ENCODE measurements at regions of chr11 and their contacts with region 1.

Region 1: DNA sequence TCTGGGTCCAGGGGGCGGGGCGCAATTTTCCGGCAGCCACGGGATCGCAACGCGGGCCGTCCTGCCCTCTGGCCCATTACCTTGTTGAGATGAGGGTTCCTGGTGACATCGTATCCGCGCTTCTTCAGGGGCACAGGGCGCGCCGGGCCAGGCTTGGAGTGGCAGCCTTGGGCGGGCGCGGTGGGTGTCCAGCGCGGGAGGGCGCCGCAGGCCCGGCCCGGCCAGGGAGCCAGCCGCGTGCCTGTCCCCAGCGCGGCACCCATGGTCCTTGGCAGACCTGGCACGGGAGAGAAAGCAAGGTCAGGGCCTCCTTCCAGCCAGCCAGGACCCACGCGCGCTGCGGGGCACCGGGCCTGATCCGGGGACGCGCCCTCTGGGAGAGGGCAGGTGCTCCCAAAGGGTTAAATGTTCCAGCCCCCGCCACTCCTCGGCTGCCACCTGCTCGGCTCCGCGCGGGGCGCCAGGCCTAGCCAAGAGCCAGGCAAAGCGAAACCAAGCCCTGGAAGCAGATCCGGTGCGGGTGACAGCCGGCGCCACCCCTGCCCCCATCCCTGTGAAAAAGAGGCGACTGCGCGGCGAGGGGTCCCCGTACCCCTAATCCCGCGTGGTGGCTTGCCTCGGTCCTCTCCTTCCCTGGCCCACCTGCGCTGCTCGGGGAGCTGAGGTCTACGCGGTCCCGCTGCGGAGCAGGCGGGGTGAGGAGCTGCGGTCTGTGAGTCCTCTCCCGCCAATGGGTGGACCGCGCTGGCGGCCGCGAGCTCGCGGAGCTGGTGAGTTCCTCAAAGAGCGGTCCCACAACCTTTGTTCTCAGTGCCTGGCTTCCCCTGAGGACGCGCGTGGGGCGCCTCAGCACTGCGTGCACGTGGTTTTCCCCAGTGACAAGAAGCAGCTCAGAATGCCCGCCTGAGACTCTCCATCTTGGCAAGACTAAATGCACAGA is at the start of gene ME3:
- DNase-seq: peak; percentile 87 to 90
- H3K4me3 ChIP-seq: peak within 1 kb of the TSS; percentile 95
- H3K4me3 Mint-ChIP-seq: peak within 1 kb of the TSS; percentile 84
- H3K27ac Mint-ChIP-seq: peak within 1 kb of the TSS; percentile 87
- H3K4me1 ChIP-seq: peaks cover 50% of the 10 kb centered on the region
- H3K4me1 Mint-ChIP-seq: peaks cover 76% of the 10 kb centered on the region
- H3K27me3 ChIP-seq: no peaks in the 10 kb centered on the region
- H3K27me3 Mint-ChIP-seq: no peaks in the 10 kb centered on the region
- CTCF ChIP-seq: peak; percentile 8 to 31
- total RNA-seq, gene ME3: 32.8 and 36.9 TPM in 2 replicates

Region 2: GRCh38 chr11:86302100-86302793 is 369.7 kb before region 1 on chr11 and contains the start of gene HIKESHI:
- CTCF ChIA-PET with region 1: no interaction called
- POLR2A ChIA-PET with region 1: no interaction called
- intact Hi-C with region 1: no loop called
- DNase-seq: peak; percentile 98 to 99
- H3K4me3 ChIP-seq: peak within 1 kb of the TSS; percentile 58
- H3K4me3 Mint-ChIP-seq: peak within 1 kb of the TSS; percentile 98
- H3K27ac Mint-ChIP-seq: peak within 1 kb of the TSS; percentile 99
- H3K4me1 ChIP-seq: 0 out of 2 replicates have a peak, but pooled peaks cover 10% of the 10 kb centered on the region
- H3K4me1 Mint-ChIP-seq: peaks cover 8% of the 10 kb centered on the region
- H3K27me3 ChIP-seq: no peaks in the 10 kb centered on the region
- H3K27me3 Mint-ChIP-seq: no peaks in the 10 kb centered on the region
- CTCF ChIP-seq: no peak
- total RNA-seq, gene HIKESHI: 81.3 and 82.0 TPM in 2 replicates

Region 3: DNA sequence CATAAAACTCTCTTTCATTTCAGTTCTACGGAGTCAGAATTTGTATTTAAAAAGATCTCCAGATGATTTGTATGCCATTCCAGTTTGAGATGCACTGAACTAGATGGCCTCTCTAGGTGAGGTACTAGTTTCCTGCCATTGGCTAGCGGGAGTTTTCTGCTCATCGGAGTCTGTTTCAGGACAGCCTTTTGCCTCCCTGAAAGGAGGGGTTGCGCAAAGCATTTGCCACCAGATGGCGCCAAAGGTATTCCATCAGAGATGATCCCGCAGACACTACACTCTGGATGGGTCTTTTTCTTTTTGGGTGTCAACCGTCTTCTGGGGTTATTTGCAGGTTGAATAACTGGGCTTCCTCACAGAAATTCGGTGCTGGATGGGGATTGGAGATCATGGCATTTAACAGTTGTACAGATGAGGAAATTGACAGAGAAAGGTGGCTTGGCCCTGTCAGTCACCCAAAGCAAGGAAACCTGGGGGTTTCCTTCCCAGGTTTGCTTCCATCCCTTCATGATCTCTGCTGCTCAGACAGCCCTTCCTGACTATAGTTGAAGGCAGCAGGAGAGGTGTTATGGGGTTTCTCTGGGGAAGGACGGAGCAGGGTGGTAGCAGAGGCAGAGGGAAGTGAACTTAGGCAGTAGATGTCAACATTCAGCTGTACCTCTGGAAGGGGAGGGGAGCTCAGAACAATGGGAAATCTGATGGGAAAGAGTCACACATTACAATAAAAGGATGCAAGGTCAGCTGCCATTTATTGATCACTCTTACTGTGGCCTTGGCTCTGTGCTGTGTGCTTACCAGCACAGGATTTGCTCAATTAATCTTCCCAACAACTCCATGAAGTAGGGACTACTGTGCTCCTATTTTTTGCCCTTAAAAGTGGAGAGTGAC is 215.7 kb before region 1 on chr11:
- CTCF ChIA-PET with region 1: no interaction called
- POLR2A ChIA-PET with region 1: no interaction called
- intact Hi-C with region 1: loop called (anchors 2 kb)
- DNase-seq: peak; percentile 91 to 93
- H3K4me3 ChIP-seq: no peak overlapping the region
- H3K4me3 Mint-ChIP-seq: no peak overlapping the region
- H3K27ac Mint-ChIP-seq: peak overlapping the region; percentile 65
- H3K4me1 ChIP-seq: peaks cover 29% of the 10 kb centered on the region
- H3K4me1 Mint-ChIP-seq: peaks cover 41% of the 10 kb centered on the region
- H3K27me3 ChIP-seq: no peaks in the 10 kb centered on the region
- H3K27me3 Mint-ChIP-seq: no peaks in the 10 kb centered on the region
- CTCF ChIP-seq: peak; percentile 98

Region 4: DNA sequence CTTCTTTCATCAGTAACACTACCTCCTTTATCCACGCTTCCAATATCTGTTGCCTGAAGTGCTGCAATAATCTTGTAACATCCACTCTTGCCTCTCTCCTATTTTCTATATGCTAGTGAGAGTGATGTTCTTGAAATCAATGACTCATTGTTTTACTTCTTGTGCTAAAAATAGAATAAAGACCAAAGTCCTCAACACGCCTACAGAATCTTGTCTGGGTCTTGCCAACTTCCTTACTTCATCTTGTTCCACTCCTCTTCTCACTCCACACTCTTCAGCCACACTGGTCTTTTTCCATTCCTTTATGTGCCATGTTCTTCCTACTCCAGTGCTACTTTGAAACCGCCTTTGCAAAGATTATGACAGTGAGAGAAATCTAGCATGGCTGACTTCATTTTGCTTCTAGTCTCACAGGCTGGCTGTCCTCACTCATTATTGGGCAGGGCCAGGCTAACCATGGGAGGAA is 160.8 kb before region 1 on chr11:
- CTCF ChIA-PET with region 1: no interaction called
- POLR2A ChIA-PET with region 1: no interaction called
- intact Hi-C with region 1: loop called (anchors 5 kb)
- DNase-seq: no peak
- H3K4me3 ChIP-seq: no peak overlapping the region
- H3K4me3 Mint-ChIP-seq: no peak overlapping the region
- H3K27ac Mint-ChIP-seq: no peak overlapping the region
- H3K4me1 ChIP-seq: peaks cover 91% of the 10 kb centered on the region
- H3K4me1 Mint-ChIP-seq: peaks cover 3% of the 10 kb centered on the region
- H3K27me3 ChIP-seq: no peaks in the 10 kb centered on the region
- H3K27me3 Mint-ChIP-seq: no peaks in the 10 kb centered on the region
- CTCF ChIP-seq: no peak

Region 5: GRCh38 chr11:86688398-86689179 is 16.6 kb after region 1 on chr11:
- CTCF ChIA-PET with region 1: no interaction called
- POLR2A ChIA-PET with region 1: no interaction called
- intact Hi-C with region 1: no loop called
- DNase-seq: no peak
- H3K4me3 ChIP-seq: no peak overlapping the region
- H3K4me3 Mint-ChIP-seq: no peak overlapping the region
- H3K27ac Mint-ChIP-seq: no peak overlapping the region
- H3K4me1 ChIP-seq: peaks cover 10% of the 10 kb centered on the region
- H3K4me1 Mint-ChIP-seq: peaks cover 28% of the 10 kb centered on the region
- H3K27me3 ChIP-seq: no peaks in the 10 kb centered on the region
- H3K27me3 Mint-ChIP-seq: no peaks in the 10 kb centered on the region
- CTCF ChIP-seq: no peak

Region 6: GRCh38 chr11:86706321-86706720 is 34.4 kb after region 1 on chr11:
- CTCF ChIA-PET with region 1: no interaction called
- POLR2A ChIA-PET with region 1: no interaction called
- intact Hi-C with region 1: loop called (anchors 1 kb)
- DNase-seq: peak; percentile 70 to 74
- H3K4me3 ChIP-seq: no peak overlapping the region
- H3K4me3 Mint-ChIP-seq: no peak overlapping the region
- H3K27ac Mint-ChIP-seq: peak overlapping the region; percentile 2
- H3K4me1 ChIP-seq: peaks cover 37% of the 10 kb centered on the region
- H3K4me1 Mint-ChIP-seq: peaks cover 45% of the 10 kb centered on the region
- H3K27me3 ChIP-seq: no peaks in the 10 kb centered on the region
- H3K27me3 Mint-ChIP-seq: no peaks in the 10 kb centered on the region
- CTCF ChIP-seq: no peak

Region 7: GRCh38 chr11:86735462-86736302 is 63.7 kb after region 1 on chr11:
- CTCF ChIA-PET with region 1: no interaction called
- POLR2A ChIA-PET with region 1: interaction called, 11 read pairs
- intact Hi-C with region 1: loop called (anchors 2 kb)
- DNase-seq: peak in 1 of 2 experiments; percentile 65
- H3K4me3 ChIP-seq: no peak overlapping the region
- H3K4me3 Mint-ChIP-seq: peak overlapping the region; percentile 45
- H3K27ac Mint-ChIP-seq: peak overlapping the region; percentile 95
- H3K4me1 ChIP-seq: peaks cover 72% of the 10 kb centered on the region
- H3K4me1 Mint-ChIP-seq: peaks cover 62% of the 10 kb centered on the region
- H3K27me3 ChIP-seq: no peaks in the 10 kb centered on the region
- H3K27me3 Mint-ChIP-seq: no peaks in the 10 kb centered on the region
- CTCF ChIP-seq: no peak

Region 8: DNA sequence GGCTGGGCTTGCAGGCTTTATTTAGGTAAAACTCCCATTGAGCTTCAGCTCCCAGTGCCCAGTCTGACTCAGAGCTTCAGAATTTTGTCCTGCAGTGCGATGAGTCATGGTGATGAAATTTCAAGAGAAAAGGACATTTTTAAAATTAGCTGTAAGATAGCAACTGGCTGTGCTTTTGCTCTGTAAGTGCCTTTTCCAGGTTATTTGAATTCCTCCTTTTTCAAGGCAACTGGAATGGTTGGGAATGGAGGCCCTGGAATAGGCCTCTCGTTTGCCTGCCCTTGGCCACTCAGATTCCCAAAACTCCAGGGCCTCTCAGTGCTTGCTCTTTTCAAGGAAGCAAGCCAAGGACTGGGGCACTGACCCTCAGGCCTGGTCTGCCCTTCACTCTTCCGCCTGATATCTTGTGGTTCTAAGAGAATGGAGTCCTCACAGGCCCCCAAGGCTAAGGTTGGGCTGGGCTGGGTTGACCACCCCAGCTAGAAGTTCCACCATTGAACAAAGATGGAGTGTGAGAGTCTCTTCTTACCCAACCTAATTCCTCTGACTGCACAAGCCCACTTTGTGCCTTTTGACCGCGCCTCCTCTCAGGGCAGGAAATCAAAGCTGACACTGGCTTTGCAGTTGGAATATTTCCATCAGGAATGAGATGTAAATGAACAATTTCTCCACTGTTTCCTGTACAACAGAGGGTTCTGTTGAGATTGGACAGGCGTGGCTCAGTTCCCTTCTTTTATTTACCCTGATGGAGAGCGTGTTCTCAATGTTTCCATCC is 68.9 kb after region 1 on chr11:
- CTCF ChIA-PET with region 1: no interaction called
- POLR2A ChIA-PET with region 1: interaction called, 11 read pairs
- intact Hi-C with region 1: loop called (anchors 2 kb)
- DNase-seq: peak; percentile 81 to 82
- H3K4me3 ChIP-seq: no peak overlapping the region
- H3K4me3 Mint-ChIP-seq: peak overlapping the region; percentile 18
- H3K27ac Mint-ChIP-seq: peak overlapping the region; percentile 97
- H3K4me1 ChIP-seq: peaks cover 83% of the 10 kb centered on the region
- H3K4me1 Mint-ChIP-seq: peaks cover 80% of the 10 kb centered on the region
- H3K27me3 ChIP-seq: no peaks in the 10 kb centered on the region
- H3K27me3 Mint-ChIP-seq: no peaks in the 10 kb centered on the region
- CTCF ChIP-seq: no peak

Region 9: DNA sequence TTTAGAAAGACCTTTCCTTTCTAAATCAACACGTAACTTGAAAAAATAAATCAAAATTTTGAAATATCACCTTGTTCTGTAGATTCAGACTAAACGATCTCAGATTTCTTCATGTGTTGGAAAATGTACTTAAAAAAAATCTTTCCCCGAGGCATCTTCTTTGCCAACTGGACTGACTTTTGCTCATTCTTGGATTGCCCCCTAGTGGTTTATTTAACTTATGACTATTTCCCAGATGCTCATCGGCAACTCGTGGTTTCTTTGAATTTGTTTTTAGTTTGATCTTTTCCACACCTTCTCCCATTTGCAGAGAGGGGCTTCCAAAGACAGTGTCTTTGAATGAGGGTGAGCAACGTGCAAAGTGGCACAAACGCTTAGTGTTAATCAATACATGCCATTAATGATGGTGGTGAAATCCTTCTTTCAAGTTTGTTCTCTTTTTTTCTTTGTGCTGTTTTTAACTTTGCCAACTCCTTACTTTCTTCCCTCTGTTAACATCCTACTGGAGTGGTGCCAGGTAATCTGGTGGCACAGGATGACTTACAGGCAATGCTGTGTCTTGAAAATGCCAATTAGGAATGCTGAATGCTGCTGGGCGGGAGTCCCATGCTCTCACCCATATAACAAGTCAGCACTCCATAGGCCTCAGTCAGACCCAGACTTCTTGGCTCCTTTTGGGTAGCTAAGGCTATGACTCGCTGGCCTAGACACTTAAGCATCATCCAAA is 146.7 kb after region 1 on chr11:
- CTCF ChIA-PET with region 1: interaction called, 3 read pairs
- POLR2A ChIA-PET with region 1: no interaction called
- intact Hi-C with region 1: loop called (anchors 1 kb)
- DNase-seq: peak in 1 of 2 experiments; percentile 74
- H3K4me3 ChIP-seq: no peak overlapping the region
- H3K4me3 Mint-ChIP-seq: no peak overlapping the region
- H3K27ac Mint-ChIP-seq: peak overlapping the region; percentile 23
- H3K4me1 ChIP-seq: peaks cover 52% of the 10 kb centered on the region
- H3K4me1 Mint-ChIP-seq: peaks cover 41% of the 10 kb centered on the region
- H3K27me3 ChIP-seq: no peaks in the 10 kb centered on the region
- H3K27me3 Mint-ChIP-seq: no peaks in the 10 kb centered on the region
- CTCF ChIP-seq: peak; percentile 83 to 95